ENCODE measurements at regions of chr1 and their contacts with region 1.

Region 1: DNA sequence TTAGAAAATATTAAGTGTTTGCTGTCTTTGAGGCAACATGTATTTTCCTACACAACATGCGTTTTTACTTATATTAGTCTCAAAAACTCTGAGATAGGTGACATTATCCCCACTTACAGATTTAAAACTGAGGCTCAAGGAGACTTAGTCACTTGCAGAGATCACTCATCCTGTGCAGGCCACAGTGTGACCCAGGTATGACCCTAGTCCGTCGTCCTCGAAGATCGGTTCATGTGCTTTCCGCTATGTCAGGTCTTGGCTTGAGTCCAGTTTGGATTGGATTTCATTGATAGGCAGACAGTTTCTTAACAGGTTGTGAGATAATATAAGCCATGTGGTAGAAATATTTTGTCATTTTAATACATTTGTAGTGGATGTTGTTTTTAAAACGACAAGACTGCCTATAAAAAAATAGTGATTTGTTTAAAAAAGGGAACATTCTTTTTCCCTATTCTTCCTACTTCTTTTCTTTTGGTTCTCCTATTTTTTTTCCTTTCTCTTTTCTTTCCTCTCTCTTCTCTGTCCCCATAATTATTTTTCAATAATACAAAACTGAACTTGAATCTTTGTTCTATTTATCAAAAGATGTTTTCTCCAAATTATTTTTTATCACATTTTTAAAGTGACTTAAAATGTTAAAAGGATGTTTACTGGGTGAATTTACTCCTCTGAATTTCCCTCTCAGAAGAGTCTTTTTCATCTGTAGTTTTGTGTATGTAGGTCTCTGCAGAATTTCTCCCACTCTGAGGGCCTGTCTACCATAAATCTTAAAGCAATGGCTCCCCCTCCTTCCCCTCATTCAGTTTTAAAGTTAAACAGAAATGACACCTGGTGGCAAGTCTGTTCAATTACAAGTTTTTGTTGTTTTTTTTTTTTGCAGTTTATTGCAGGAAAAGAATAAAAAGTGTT is 81.8 kb downstream of the PHTF1 start:
- DNase-seq: peak in 1 of 2 donors; percentile 35
- ATAC-seq: peak in 7 of 8 donors; percentile 52 to 74 (median 59)
- H3K4me3 ChIP-seq: no peak overlapping the region
- H3K27ac ChIP-seq: no peak overlapping the region
- H3K4me1 ChIP-seq: peaks cover 0 to 11% (median 6%) of the 10 kb centered on the region in 9 donors
- H3K27me3 ChIP-seq: no peaks in the 10 kb centered on the region
- CTCF ChIP-seq: peak; percentile 35 to 78 (median 62)

Region 2: GRCh38 chr1:112715264-112716053 is 962.0 kb before region 1 on chr1 and contains the start of gene PPM1J:
- intact Hi-C with region 1: loop called in 2 of 10 experiments (anchors 5 to 10 kb)
- DNase-seq: peak; percentile 98 to 99
- ATAC-seq: peak; percentile 87 to 96 (median 91)
- H3K4me3 ChIP-seq: peak within 1 kb of the TSS; percentile 55 to 81 (median 71)
- H3K27ac ChIP-seq: peak within 1 kb of the TSS in 9 of 10 donors; percentile 67 to 88 (median 78)
- H3K4me1 ChIP-seq: peaks cover 2 to 35% (median 23%) of the 10 kb centered on the region in 9 donors
- H3K27me3 ChIP-seq: peaks cover 0 to 30% (median 12%) of the 10 kb centered on the region in 7 donors
- CTCF ChIP-seq: peak in 1 of 9 donors; percentile 2
- total RNA-seq, gene PPM1J: 5.8 to 11.0 (median 8.5) TPM

Region 3: DNA sequence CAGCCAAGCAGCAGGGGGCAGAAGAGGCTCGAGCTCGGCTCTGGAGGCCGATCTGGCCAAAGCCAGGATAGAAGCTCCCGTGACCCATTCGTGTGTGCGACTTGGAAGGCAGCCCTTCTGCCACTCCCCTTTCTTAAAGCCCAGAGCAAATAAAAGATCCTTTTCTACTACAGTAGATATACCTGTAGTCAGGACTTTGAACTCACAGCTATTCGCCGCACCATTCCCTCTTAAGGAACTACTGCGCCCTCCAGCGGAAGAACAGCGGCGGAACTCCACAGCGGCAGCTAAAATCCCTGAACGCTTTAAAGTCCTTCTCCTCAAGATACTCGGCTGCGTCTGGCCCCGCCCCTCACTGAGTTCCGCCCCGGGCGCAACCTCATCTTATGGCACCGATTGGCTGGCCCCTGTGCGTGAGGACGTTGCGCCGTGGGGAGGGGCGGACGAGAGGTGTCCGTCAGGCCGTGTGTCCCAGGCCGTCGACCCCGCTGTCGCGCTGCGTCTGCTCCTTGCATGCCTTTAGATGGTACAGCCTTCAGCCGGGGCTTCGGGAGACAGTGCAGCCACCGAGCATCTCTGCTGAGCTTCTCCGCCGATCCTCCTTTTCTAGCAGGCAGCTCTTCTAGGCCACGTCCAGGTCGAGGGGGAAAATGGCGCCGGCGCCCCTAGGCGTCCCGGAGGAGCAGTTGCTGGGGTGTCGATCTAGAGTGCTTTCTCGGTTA is 604.6 kb before region 1 on chr1 and contains the start of gene LRIG2:
- intact Hi-C with region 1: loop called in 1 of 10 experiments (anchors 5 kb)
- DNase-seq: peak; percentile 98
- ATAC-seq: peak; percentile 99 to 100 (median 100)
- H3K4me3 ChIP-seq: peak within 1 kb of the TSS; percentile 64 to 94 (median 78)
- H3K27ac ChIP-seq: peak within 1 kb of the TSS; percentile 77 to 94 (median 92)
- H3K4me1 ChIP-seq: peaks cover 0 to 47% (median 34%) of the 10 kb centered on the region in 9 donors
- H3K27me3 ChIP-seq: no peaks in the 10 kb centered on the region
- CTCF ChIP-seq: peak; percentile 79 to 95 (median 88)
- total RNA-seq, gene LRIG2: 7.8 to 11.3 (median 8.5) TPM

Region 4: GRCh38 chr1:113140588-113141446 is 536.7 kb before region 1 on chr1:
- intact Hi-C with region 1: loop called (anchors 1 to 5 kb)
- DNase-seq: peak; percentile 32 to 66
- ATAC-seq: peak; percentile 77 to 92 (median 90)
- H3K4me3 ChIP-seq: peak overlapping the region in 4 of 10 donors; percentile 2 to 24 (median 12)
- H3K27ac ChIP-seq: peak overlapping the region in 6 of 10 donors; percentile 6 to 68 (median 54)
- H3K4me1 ChIP-seq: peaks cover 7 to 37% (median 30%) of the 10 kb centered on the region in 9 donors
- H3K27me3 ChIP-seq: no peaks in the 10 kb centered on the region
- CTCF ChIP-seq: peak; percentile 68 to 91 (median 84)

Region 5: GRCh38 chr1:113226148-113226547 is 451.4 kb before region 1 on chr1:
- intact Hi-C with region 1: loop called in 1 of 10 experiments (anchors 10 kb)
- DNase-seq: peak in 1 of 2 donors; percentile 23
- ATAC-seq: peak in 7 of 8 donors; percentile 33 to 72 (median 64)
- H3K4me3 ChIP-seq: peak overlapping the region in 4 of 10 donors; percentile 6 to 28 (median 21)
- H3K27ac ChIP-seq: peak overlapping the region in 6 of 10 donors; percentile 17 to 72 (median 34)
- H3K4me1 ChIP-seq: peaks cover 0 to 4% (median 0%) of the 10 kb centered on the region in 9 donors
- H3K27me3 ChIP-seq: no peaks in the 10 kb centered on the region
- CTCF ChIP-seq: no peak

Region 6: DNA sequence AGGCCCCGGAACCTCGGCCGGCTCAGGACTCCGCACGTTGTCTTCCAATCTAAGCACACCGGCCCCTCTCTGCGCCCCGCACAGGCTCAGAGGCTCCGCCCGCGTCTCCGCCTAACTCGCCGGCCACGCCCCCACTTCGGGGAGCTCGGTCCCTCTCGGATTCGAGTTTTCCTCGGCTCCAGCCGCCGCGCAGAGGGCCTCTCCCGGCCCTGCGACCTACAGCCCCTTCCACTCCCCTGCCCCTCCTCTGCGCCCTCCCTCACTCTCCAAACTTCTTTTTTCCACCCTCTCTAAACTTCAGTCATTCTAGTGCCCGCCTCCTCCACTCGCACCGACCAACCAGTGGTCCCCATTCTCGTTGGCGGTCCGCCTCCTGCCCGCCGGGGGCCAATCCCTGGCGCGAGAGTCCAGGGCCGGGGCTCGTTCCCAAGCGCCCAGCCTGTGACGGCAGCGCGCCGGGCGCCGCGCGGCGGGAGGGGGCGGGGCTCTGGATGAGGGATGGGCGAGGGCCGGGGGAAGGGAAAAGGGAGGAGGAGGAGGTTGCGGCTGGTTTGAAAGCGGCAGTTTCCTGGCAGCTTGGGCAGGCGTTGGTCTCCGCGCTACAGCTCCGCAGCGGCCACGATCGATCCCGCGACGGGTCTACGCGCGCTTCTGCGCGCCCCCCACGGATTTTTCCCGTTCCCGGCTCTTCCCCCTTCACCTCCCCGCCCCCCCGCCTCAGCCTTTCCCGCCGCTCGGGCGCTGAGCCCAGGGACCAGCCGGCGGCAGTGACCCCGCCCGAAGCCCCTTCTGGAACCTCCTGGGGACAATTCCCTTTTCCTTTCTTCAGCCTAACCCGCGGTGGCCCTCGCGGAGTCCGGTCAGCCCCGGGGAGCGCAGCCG is 287.3 kb before region 1 on chr1 and contains the start of gene MAGI3:
- intact Hi-C with region 1: loop called in 4 of 10 experiments (anchors 10 kb)
- DNase-seq: peak; percentile 98
- ATAC-seq: peak; percentile 97 to 99 (median 97)
- H3K4me3 ChIP-seq: peak within 1 kb of the TSS; percentile 90 to 99 (median 94)
- H3K27ac ChIP-seq: peak within 1 kb of the TSS; percentile 84 to 95 (median 92)
- H3K4me1 ChIP-seq: peaks cover 0 to 47% (median 39%) of the 10 kb centered on the region in 9 donors
- H3K27me3 ChIP-seq: peaks cover 0 to 39% (median 0%) of the 10 kb centered on the region in 7 donors
- CTCF ChIP-seq: peak in 2 of 9 donors; percentile 4 to 9
- total RNA-seq, gene MAGI3: 4.3 to 9.4 (median 8.2) TPM

Region 7: DNA sequence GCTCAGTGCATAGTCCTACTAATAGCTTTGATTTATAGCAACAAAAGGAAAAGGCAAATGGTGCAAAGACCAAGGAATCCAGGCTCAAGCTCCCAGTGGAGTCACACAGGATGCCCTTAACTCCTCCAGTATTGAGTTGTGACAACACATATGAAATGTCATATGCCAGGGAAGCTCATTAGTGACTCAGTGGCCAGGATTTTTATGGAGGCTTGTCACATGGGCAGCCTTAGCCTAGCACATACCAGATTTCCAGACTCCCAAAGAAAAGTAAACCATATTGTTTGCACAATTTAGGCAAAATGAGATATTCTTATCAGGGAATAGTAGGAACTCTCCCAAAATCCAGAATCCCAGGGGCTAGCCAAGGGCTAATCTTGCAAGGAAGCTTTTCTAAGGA is 157.9 kb before region 1 on chr1:
- intact Hi-C with region 1: no loop called
- DNase-seq: no peak
- ATAC-seq: no peak
- H3K4me3 ChIP-seq: no peak overlapping the region
- H3K27ac ChIP-seq: no peak overlapping the region
- H3K4me1 ChIP-seq: peaks cover 0 to 10% (median 0%) of the 10 kb centered on the region in 9 donors
- H3K27me3 ChIP-seq: no peaks in the 10 kb centered on the region
- CTCF ChIP-seq: no peak